ENCODE measurements at regions of chr6 and their contacts with region 1.

Region 1: DNA sequence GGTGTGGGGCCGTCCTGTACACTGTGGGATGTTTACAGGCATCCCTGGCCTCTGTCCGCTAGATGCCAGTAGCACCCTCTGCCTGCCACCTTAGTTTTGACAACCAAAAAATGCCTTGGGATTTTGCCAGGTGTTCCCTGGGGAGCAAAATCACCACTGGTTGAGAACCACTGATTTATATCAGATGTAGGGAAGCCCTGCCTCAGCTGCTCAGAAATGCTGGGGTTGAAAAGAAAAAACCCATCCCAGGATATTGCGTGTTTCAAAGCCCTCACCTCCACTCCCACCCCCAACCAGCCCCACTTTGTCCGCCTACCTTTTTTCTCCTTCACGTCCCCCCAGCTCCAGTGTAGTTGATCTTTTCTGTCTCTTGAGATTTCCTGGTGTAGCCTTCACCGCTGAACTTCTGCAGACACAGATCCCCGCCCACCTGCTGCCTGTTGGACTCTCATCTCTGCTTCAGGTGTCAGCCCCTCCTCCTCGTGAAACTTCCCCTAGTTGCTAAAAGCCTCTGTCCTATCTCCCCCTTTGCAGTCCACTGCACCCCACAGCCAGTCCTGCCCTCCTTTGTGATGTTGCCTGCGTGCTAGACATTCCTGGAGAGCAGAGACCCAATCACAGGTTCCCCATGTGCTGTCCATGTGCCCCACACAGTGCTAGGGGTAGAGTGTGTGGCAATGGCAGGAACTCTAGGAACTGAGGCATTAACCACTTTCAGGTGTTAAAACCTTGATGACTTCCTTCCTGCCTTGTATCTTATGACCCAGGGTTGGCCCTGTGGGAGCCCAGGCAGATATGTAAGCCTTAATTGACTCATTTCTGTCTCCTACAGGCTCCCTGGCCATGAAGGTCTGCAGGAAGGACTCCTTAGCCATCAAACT is 98.9 kb downstream of the TBC1D7 start:
- DNase-seq: peak; percentile 49
- ATAC-seq: peak; percentile 94
- H3K4me3 ChIP-seq: peak overlapping the region in 1 of 3 experiments; percentile 2; a peak in 1 of 6 replicates
- H3K27ac ChIP-seq: no peak overlapping the region
- H3K4me1 ChIP-seq: peaks cover 13% of the 10 kb centered on the region
- H3K27me3 ChIP-seq: peaks cover 0 to 17% of the 10 kb centered on the region in 2 experiments; a peak in 2 of 5 replicates
- CTCF ChIP-seq: peak; percentile 73
- EP300 ChIP-seq: no peak
- POLR2A ChIP-seq: no peak
- RAD21 ChIP-seq: peak; percentile 71

Region 2: DNA sequence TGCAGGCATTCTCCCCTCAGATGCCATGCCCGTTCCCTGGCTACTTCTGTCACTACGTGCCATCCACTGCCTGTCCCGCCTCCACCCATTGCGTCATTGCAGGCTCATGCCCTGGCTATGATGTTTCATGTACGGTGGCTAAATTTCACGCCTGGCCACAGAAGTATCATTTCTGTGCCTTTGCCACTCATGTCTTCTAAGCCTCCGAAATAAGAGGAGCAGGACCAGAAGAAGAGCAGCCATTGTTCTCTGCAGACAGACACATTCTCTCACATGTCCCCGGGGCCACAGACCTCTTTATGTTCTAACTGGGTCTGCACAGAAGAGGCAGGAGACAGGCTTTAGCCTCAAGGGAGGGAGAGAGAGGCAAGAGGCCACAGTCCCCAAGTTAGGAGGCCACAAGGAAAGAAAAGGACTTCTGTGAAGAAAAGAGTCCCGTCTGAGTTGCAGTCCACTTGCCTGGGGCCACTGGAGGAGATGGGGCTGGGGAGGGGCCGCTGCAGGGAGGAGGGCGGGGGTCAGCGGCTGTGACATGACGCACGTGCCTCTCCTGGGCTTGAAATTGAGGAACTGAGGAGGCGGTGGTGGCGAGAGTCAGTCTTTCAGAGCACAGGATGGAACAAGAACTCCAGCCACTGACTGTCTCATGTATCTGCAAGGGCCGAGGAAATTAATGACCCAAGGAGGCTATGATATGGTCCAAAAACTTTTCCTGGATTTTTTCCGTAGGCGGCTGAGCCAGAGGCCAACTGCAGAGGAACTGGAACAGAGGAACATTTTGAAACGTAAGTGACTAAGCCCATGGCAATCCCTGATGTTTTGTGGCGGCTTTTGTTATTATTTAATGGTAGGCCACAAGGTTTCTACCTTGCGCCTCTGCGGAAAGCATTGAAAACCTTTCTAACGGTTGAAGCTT is 42.9 kb after region 1 on chr6:
- CTCF ChIA-PET with region 1: no interaction called
- POLR2A ChIA-PET with region 1: no interaction called
- in situ Hi-C with region 1: no loop called
- intact Hi-C with region 1: loop called (anchors 5 kb)
- DNase-seq: no peak
- ATAC-seq: no peak
- H3K4me3 ChIP-seq: no peak overlapping the region
- H3K27ac ChIP-seq: no peak overlapping the region
- H3K4me1 ChIP-seq: peaks cover 10% of the 10 kb centered on the region
- H3K27me3 ChIP-seq: no peaks in the 10 kb centered on the region
- CTCF ChIP-seq: no peak
- EP300 ChIP-seq: no peak
- POLR2A ChIP-seq: no peak
- RAD21 ChIP-seq: no peak

Measured in HepG2 (cell line).